Activated naive CD4-positive, alpha-beta T cell treated with anti-CD3 and anti-CD28 coated beads, Interleukin-2, amount 10 ng/mL, durations not matched to agents 7 days and 5 days (primary cell): ENCODE measurements at regions of chr3 and their contacts with region 1.

Region 1: DNA sequence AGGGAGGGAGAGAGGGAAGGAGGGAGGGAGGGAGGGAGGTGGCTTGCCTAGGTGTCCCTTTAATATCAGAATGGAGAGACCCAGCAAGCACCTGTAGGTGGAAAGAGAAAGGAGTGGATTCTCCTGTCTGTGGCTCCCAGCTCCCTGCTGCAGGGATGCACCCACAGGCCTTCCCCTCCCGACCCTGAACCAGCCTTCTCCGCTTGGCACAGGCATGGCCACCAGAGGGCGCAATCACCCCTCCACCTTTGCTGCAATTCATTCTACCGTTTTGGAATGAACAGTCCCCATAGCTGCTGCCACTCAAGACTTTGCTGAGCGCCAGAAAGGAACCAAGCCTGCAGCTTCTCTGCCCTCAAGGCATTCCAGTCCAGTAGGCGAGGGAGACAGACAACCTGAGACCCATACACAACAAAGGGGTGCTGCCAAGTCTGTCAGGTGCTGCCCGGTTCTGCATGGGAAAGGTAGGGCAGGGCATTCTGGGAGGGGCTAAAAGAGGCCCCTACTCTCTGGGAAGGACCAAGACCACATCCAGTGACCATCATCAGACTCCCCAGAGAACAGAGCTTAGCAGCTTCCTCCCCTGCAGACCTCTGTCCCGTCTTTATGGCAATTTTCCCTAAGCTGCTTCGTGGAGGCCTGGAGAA is 4.9 kb downstream of the TLR9 start:
- DNase-seq: peak; percentile 94
- H3K4me3 Mint-ChIP-seq: peak overlapping the region; percentile 55
- H3K27ac Mint-ChIP-seq: peak overlapping the region; percentile 75
- H3K4me1 Mint-ChIP-seq: peaks cover 96% of the 10 kb centered on the region
- H3K27me3 Mint-ChIP-seq: no peaks in the 10 kb centered on the region

Region 2: GRCh38 chr3:52204337-52205073 is 16.0 kb before region 1 on chr3:
- CTCF ChIA-PET with region 1: interaction called, 35 read pairs
- DNase-seq: no peak
- H3K4me3 Mint-ChIP-seq: no peak overlapping the region
- H3K27ac Mint-ChIP-seq: no peak overlapping the region
- H3K4me1 Mint-ChIP-seq: peaks cover 45% of the 10 kb centered on the region
- H3K27me3 Mint-ChIP-seq: no peaks in the 10 kb centered on the region

Region 3: GRCh38 chr3:52238761-52239701 is 18.5 kb after region 1 on chr3 and contains the start of gene TWF2:
- CTCF ChIA-PET with region 1: interaction called, 10 read pairs
- DNase-seq: peak; percentile 88
- H3K4me3 Mint-ChIP-seq: peak within 1 kb of the TSS; percentile 96
- H3K27ac Mint-ChIP-seq: peak within 1 kb of the TSS; percentile 96
- H3K4me1 Mint-ChIP-seq: peaks cover 80% of the 10 kb centered on the region
- H3K27me3 Mint-ChIP-seq: no peaks in the 10 kb centered on the region

Region 4: DNA sequence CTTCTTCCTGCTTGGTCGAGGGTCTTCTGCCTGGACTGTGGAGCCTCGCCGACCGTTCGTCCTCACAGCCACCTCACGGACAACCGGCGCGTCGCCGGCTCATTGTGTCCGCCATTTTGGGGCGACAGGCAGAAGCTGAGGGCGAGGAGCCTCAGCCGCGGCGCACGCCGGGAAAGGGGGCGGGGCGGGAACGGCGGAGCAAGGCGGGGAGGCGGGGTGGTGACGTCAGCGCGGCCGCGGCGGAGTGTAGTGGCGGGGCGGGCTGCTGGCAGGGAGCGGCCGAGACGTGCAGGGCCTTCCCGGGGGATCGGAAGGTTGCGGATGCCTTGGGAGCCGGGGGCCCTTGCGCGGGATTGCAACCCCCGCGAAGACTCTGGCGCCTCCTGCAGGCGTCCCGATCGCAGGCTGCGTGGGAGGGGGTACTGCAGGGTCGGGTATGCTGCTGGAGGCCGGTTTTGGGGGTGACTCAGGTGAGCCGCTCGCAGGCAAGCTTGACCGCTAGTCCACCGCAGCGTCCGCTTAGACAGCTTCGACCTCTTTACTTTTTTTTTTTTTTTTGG is 58.1 kb after region 1 on chr3 and contains the start of gene WDR82:
- CTCF ChIA-PET with region 1: interaction called, 19 read pairs
- DNase-seq: peak; percentile 98
- H3K4me3 Mint-ChIP-seq: peak within 1 kb of the TSS; percentile 95
- H3K27ac Mint-ChIP-seq: peak within 1 kb of the TSS; percentile 98
- H3K4me1 Mint-ChIP-seq: peaks cover 57% of the 10 kb centered on the region
- H3K27me3 Mint-ChIP-seq: no peaks in the 10 kb centered on the region

Region 5: DNA sequence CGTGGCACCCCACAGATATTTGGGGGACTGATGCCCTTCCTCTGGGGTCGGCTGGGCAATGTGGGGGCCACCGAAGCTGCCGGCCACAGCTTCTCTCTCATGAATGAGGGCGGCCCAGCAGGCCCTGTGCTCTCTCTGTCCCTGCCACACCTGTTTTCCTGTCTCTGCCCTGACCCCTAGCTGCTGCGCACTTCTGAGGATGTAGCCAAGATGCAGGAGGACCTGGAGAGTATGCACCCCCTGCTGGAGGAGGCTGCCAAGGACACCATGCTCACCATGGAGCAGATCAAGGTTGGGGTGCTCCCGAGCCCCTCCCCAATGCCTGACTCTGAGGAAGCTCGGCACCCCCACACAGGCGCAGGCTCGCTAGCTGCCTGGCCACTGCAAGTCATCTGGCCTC is 164.7 kb after region 1 on chr3:
- CTCF ChIA-PET with region 1: interaction called, 13 read pairs
- DNase-seq: peak; percentile 64
- H3K4me3 Mint-ChIP-seq: no peak overlapping the region
- H3K27ac Mint-ChIP-seq: no peak overlapping the region
- H3K4me1 Mint-ChIP-seq: no peaks in the 10 kb centered on the region
- H3K27me3 Mint-ChIP-seq: no peaks in the 10 kb centered on the region

Region 6: DNA sequence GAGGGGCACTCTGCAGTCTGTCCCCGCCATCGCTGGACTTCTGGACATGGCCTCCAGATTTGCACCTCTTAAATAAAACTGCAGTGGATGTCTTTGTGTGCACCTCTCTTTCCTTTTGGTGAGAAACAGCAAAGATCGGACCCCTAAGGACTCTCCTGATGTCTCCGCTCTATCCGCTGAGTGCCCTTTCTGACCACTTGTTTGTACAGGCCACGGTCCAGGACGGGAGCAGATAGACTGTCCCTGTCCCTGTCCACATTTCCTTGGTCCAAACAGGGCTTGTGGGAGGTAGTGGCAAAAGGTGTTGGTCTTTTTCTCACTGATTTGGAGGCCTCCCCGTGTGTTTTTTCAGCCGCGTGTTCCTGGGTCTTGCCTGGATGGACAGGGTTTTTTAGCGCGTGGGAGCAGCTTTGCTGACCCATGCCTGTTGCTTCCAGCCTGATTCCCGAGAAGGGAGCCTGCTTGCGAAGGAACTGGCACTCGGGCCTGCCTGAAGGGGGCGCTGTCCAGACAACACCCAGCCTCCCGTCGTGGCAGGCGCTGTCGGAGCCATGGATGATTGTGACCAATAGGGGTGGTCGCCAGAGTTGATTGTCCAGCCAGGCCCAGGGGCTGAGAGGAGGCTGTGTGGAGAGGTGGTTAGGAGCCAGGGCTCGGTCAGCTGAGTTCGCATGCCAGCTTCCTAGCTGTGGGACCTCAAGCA is 261.5 kb after region 1 on chr3:
- CTCF ChIA-PET with region 1: no interaction called
- DNase-seq: no peak
- H3K4me3 Mint-ChIP-seq: no peak overlapping the region
- H3K27ac Mint-ChIP-seq: no peak overlapping the region
- H3K4me1 Mint-ChIP-seq: no peaks in the 10 kb centered on the region
- H3K27me3 Mint-ChIP-seq: no peaks in the 10 kb centered on the region

Region 7: DNA sequence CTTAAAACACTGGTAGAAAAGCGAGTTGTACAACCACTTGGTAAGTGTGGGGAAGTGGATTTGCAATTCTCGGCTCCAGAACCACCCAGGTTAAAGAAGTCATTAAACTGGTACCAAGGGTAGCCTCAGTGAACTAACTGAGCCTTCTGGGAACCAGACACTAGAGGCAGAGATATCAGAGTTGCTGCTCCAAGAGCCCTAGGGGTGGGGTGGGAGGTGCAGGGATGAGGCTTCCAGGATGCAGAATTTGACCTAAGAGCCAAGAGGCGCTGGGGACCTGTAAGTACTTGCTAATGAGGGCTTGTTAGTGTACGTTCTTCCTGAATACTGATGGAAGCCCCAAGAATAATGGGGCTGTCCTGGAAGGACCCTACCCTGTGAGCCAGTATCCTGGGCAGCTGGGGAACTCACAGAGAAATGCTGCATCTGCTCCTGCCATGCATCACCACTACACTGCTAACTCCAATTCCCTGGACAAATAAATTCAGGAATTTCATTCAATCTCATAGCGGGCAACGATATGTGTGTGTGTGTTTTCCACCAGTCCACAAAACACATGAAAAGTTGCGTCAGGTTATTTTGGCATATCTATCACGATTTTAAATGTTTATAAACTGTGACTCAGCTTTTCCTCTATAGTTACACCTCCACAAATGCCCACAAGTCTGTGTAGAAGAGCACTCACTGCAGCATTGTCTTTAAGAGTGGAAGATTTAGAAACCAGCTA is 653.1 kb after region 1 on chr3:
- CTCF ChIA-PET with region 1: no interaction called
- DNase-seq: no peak
- H3K4me3 Mint-ChIP-seq: no peak overlapping the region
- H3K27ac Mint-ChIP-seq: no peak overlapping the region
- H3K4me1 Mint-ChIP-seq: peaks cover 28% of the 10 kb centered on the region
- H3K27me3 Mint-ChIP-seq: no peaks in the 10 kb centered on the region